ENCODE measurements at regions of chr14 and their contacts with region 1.

Region 1: DNA sequence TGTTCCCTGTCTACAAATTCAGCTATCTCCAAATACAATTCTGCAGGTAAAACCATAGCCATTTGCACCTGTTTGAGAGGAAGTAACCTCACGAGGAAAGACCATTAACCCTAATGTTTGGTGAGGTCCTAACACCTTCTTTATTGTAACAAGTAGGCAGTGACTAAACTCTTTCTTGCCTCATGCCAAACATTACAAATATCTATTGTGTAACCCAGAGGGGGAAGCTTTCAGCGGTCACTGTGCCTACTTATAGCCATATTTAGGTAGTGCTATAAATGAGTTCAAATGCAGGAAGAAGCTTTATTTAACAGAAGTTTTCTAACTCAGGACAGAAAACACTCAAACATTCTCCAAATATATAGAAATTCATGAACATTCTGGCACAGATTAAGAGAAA is 252.7 kb downstream of the LRFN5 start:
- DNase-seq: no peak
- ATAC-seq: no peak
- H3K4me3 ChIP-seq: no peak overlapping the region
- H3K4me3 Mint-ChIP-seq: no peak overlapping the region
- H3K27ac ChIP-seq: no peak overlapping the region
- H3K27ac Mint-ChIP-seq: no peak overlapping the region
- H3K4me1 ChIP-seq: no peaks in the 10 kb centered on the region
- H3K4me1 Mint-ChIP-seq: no peaks in the 10 kb centered on the region
- H3K27me3 ChIP-seq: no peaks in the 10 kb centered on the region
- H3K27me3 Mint-ChIP-seq: no peaks in the 10 kb centered on the region

Region 2: GRCh38 chr14:41051801-41052200 is 807.5 kb before region 1 on chr14:
- CTCF ChIA-PET with region 1: no interaction called
- POLR2A ChIA-PET with region 1: no interaction called
- DNase-seq: no peak
- ATAC-seq: no peak
- H3K4me3 ChIP-seq: no peak overlapping the region
- H3K4me3 Mint-ChIP-seq: no peak overlapping the region
- H3K27ac ChIP-seq: no peak overlapping the region
- H3K27ac Mint-ChIP-seq: no peak overlapping the region
- H3K4me1 ChIP-seq: no peaks in the 10 kb centered on the region
- H3K4me1 Mint-ChIP-seq: no peaks in the 10 kb centered on the region
- H3K27me3 ChIP-seq: no peaks in the 10 kb centered on the region
- H3K27me3 Mint-ChIP-seq: no peaks in the 10 kb centered on the region

Region 3: DNA sequence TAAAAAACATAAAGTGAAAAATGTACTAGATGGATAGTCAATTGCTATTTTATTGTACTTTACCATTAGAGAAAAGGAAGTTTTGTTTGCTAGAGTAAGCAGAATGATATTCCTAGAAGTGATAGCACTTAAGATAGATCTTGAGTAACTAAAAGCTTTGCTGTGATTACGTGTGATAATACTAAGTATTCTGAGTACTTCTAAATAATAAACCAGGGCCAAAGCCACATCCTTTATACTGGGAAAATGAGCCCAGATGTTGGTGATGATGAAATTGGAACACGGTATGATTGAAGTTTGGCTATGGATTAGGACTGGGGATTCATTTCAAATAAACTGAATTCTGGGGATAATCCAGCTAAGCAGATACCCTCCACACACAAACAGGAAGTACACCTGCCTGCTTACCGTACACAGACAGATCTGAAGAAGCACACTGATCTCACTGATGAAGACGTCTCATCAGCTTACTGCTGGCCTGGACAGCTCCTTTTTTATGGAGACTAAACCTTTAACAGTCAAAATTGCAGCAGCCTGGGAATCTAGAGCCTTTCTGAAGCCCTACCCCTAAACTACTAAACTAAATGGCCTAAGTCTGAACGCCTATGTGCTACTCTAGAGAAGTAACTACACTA is 52.9 kb before region 1 on chr14:
- CTCF ChIA-PET with region 1: no interaction called
- POLR2A ChIA-PET with region 1: interaction called in 1 of 2 experiments, 13 read pairs
- DNase-seq: no peak
- ATAC-seq: no peak
- H3K4me3 ChIP-seq: no peak overlapping the region
- H3K4me3 Mint-ChIP-seq: no peak overlapping the region
- H3K27ac ChIP-seq: no peak overlapping the region
- H3K27ac Mint-ChIP-seq: peak overlapping the region in 1 of 2 donors; percentile 24
- H3K4me1 ChIP-seq: no peaks in the 10 kb centered on the region
- H3K4me1 Mint-ChIP-seq: peaks cover 0 to 6% (median 0%) of the 10 kb centered on the region in 3 donors
- H3K27me3 ChIP-seq: no peaks in the 10 kb centered on the region
- H3K27me3 Mint-ChIP-seq: no peaks in the 10 kb centered on the region

Region 4: DNA sequence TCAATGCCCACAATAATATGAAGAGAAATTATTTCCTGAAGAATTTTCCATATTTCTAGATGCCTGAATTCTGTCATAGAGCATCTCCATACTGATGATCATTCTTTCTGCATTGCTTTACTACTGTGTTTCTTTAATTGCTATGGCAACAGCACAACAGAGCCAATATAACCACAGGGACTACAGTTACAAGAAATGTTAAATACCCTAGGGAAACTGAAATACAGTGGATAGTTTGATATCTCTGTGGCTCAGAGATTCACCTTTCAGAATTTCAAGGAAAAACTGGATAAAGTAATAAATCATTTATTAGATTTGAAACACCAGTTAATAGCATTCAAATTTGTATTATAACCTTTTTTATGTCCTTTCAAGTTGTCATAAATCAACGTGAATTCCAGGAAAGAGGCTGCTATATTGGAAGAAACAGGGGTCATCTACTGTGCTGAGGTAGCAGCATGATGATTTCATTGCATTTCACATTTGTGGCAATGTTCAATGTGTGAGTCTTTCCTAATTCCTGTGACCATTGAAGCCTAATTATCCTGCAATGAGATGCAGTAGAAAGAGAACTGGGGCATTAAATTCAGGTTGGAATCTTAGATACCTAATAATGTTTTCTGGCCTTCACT is 14.5 kb after region 1 on chr14:
- CTCF ChIA-PET with region 1: no interaction called
- POLR2A ChIA-PET with region 1: no interaction called
- DNase-seq: no peak
- ATAC-seq: no peak
- H3K4me3 ChIP-seq: no peak overlapping the region
- H3K4me3 Mint-ChIP-seq: no peak overlapping the region
- H3K27ac ChIP-seq: no peak overlapping the region
- H3K27ac Mint-ChIP-seq: no peak overlapping the region
- H3K4me1 ChIP-seq: no peaks in the 10 kb centered on the region
- H3K4me1 Mint-ChIP-seq: no peaks in the 10 kb centered on the region
- H3K27me3 ChIP-seq: no peaks in the 10 kb centered on the region
- H3K27me3 Mint-ChIP-seq: no peaks in the 10 kb centered on the region